Right lobe of liver (tissue), 6 donors: ENCODE measurements at regions of chr20 and their contacts with region 1.

Region 1: GRCh38 chr20:8043687-8044282 is 24.2 kb upstream of the TMX4 start:
- DNase-seq: no peak
- ATAC-seq: peak; percentile 88 to 94 (median 92)
- H3K4me3 ChIP-seq: no peak overlapping the region
- H3K27ac ChIP-seq: no peak overlapping the region
- H3K4me1 ChIP-seq: no peaks in the 10 kb centered on the region
- H3K27me3 ChIP-seq: no peaks in the 10 kb centered on the region
- CTCF ChIP-seq: peak; percentile 70 to 84 (median 77)
- POLR2A ChIP-seq: no peak

Region 2: GRCh38 chr20:8131598-8132483 is 88.1 kb after region 1 on chr20 and contains the start of gene PLCB1:
- intact Hi-C with region 1: no loop called
- DNase-seq: peak; percentile 83 to 90 (median 86)
- ATAC-seq: peak; percentile 96 to 98 (median 98)
- H3K4me3 ChIP-seq: peak within 1 kb of the TSS; percentile 64 to 94 (median 69)
- H3K27ac ChIP-seq: peak within 1 kb of the TSS; percentile 73 to 90 (median 75)
- H3K4me1 ChIP-seq: no peaks in the 10 kb centered on the region
- H3K27me3 ChIP-seq: no peaks in the 10 kb centered on the region
- CTCF ChIP-seq: peak; percentile 68 to 90 (median 74)
- POLR2A ChIP-seq: no peak
- total RNA-seq, gene PLCB1: 5.0 to 9.9 (median 5.7) TPM

Region 3: DNA sequence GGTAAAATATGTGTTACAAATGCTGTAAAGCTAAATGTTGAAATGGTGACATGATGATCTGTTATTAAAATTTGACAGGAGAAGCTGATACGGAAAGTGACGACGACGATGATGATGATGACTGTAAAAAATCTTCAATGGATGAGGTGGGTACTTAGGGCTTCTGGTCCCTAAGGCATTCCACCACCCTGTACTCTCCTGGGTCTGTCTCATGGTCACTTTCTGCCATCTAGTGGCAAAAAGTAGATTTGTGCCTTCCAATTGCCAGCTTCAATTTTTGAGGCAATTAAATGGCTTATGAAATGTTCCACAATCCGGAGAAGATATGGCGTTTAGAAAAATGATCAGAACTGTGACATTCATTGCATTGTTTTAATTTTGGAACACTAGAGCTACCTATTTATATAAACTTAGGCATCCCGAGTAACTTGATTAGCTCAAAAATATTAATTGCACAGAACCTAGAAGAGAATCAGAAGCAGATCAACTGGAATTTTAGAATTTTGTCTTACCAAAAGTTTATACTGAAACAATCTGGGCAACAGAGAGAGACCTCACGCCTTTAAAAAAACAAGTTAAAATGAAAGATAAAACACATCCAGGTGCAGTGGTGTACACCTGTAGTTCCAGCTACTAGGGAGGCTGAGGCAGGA is 678.6 kb after region 1 on chr20:
- intact Hi-C with region 1: loop called in 1 of 2 experiments (anchors 10 kb)
- DNase-seq: peak in 1 of 3 donors; percentile 49
- ATAC-seq: peak; percentile 72 to 84 (median 81)
- H3K4me3 ChIP-seq: no peak overlapping the region
- H3K27ac ChIP-seq: no peak overlapping the region
- H3K4me1 ChIP-seq: peaks cover 0 to 13% (median 0%) of the 10 kb centered on the region in 4 donors
- H3K27me3 ChIP-seq: no peaks in the 10 kb centered on the region
- CTCF ChIP-seq: peak; percentile 71 to 85 (median 79)
- POLR2A ChIP-seq: no peak